IMR-90 (cell line): ENCODE measurements at regions of chr5 and their contacts with region 1.

Region 1: DNA sequence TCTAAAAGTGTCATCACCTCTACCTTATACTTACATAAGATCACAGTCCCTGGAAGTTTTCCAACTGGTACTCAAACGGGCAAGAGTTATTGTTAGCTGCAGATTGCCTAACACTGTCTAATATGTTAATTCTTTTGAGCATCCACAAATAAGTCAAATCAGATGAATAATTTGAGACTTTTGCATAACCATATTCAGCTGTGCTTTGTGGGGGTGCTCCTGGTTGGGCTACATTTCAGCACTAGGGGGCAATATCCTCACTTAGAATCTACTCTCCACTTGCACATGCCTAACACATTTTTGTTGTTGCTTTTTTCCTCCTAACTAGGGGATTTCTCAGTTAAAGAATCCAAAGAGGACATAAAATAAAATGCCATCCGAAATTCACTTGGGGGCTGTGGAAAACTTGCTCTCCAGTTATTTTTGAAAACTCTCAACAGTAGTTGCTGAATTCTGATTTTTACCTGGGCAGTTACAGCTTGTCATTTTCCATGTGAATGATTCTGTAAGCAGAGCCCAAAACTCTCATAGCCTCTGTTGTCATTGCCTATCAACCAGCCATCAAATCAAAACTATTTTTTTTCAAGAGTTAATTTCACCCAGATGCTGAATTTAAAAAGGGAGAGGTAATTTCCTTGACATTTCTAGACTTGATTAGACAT is 71.5 kb downstream of the TRIM36 start:
- DNase-seq: peak; percentile 60
- ATAC-seq: peak; percentile 94
- H3K4me3 ChIP-seq: no peak overlapping the region
- H3K27ac ChIP-seq: no peak overlapping the region
- H3K4me1 ChIP-seq: no peaks in the 10 kb centered on the region
- H3K27me3 ChIP-seq: peaks cover 2% of the 10 kb centered on the region
- CTCF ChIP-seq: peak; percentile 82
- POLR2A ChIP-seq: no peak
- RAD21 ChIP-seq: peak; percentile 74

Region 2: GRCh38 chr5:113357696-113358476 is 1740.3 kb before region 1 on chr5:
- CTCF ChIA-PET with region 1: no interaction called
- POLR2A ChIA-PET with region 1: no interaction called
- dilution Hi-C with region 1: no loop called
- in situ Hi-C with region 1: no loop called
- intact Hi-C with region 1: no loop called
- DNase-seq: no peak
- ATAC-seq: no peak
- H3K4me3 ChIP-seq: no peak overlapping the region
- H3K27ac ChIP-seq: no peak overlapping the region
- H3K4me1 ChIP-seq: peaks cover 5% of the 10 kb centered on the region; the same call in 1 of the 2 replicates
- H3K27me3 ChIP-seq: no peaks in the 10 kb centered on the region
- CTCF ChIP-seq: no peak
- POLR2A ChIP-seq: no peak
- RAD21 ChIP-seq: no peak

Region 3: GRCh38 chr5:115246361-115246991 is 148.3 kb after region 1 on chr5:
- CTCF ChIA-PET with region 1: interaction called, 6 read pairs
- POLR2A ChIA-PET with region 1: no interaction called
- dilution Hi-C with region 1: no loop called
- in situ Hi-C with region 1: loop called (anchors 10 kb)
- intact Hi-C with region 1: loop called (anchors 1 kb)
- DNase-seq: peak; percentile 48
- ATAC-seq: peak; percentile 83
- H3K4me3 ChIP-seq: no peak overlapping the region
- H3K27ac ChIP-seq: no peak overlapping the region
- H3K4me1 ChIP-seq: peaks cover 6% of the 10 kb centered on the region
- H3K27me3 ChIP-seq: no peaks in the 10 kb centered on the region
- CTCF ChIP-seq: peak; percentile 83
- POLR2A ChIP-seq: no peak
- RAD21 ChIP-seq: peak; percentile 77

Region 4: GRCh38 chr5:115586601-115587048 is 488.5 kb after region 1 on chr5:
- CTCF ChIA-PET with region 1: no interaction called
- POLR2A ChIA-PET with region 1: no interaction called
- dilution Hi-C with region 1: no loop called
- in situ Hi-C with region 1: no loop called
- intact Hi-C with region 1: loop called (anchors 5 kb)
- DNase-seq: peak; percentile 54
- ATAC-seq: peak; percentile 52; the same call in 1 of the 2 replicates
- H3K4me3 ChIP-seq: no peak overlapping the region
- H3K27ac ChIP-seq: no peak overlapping the region
- H3K4me1 ChIP-seq: peaks cover 6% of the 10 kb centered on the region
- H3K27me3 ChIP-seq: no peaks in the 10 kb centered on the region
- CTCF ChIP-seq: peak; percentile 67
- POLR2A ChIP-seq: no peak
- RAD21 ChIP-seq: peak; percentile 77

Region 5: GRCh38 chr5:115818821-115819220 is 720.6 kb after region 1 on chr5:
- CTCF ChIA-PET with region 1: no interaction called
- POLR2A ChIA-PET with region 1: no interaction called
- dilution Hi-C with region 1: no loop called
- in situ Hi-C with region 1: no loop called
- intact Hi-C with region 1: no loop called
- DNase-seq: no peak
- ATAC-seq: no peak
- H3K4me3 ChIP-seq: no peak overlapping the region
- H3K27ac ChIP-seq: no peak overlapping the region
- H3K4me1 ChIP-seq: no peaks in the 10 kb centered on the region; the same call in 1 of the 2 replicates
- H3K27me3 ChIP-seq: peaks cover 23% of the 10 kb centered on the region
- CTCF ChIP-seq: no peak
- POLR2A ChIP-seq: no peak
- RAD21 ChIP-seq: no peak